ENCODE measurements at regions of chr16 and their contacts with region 1.

Region 1: DNA sequence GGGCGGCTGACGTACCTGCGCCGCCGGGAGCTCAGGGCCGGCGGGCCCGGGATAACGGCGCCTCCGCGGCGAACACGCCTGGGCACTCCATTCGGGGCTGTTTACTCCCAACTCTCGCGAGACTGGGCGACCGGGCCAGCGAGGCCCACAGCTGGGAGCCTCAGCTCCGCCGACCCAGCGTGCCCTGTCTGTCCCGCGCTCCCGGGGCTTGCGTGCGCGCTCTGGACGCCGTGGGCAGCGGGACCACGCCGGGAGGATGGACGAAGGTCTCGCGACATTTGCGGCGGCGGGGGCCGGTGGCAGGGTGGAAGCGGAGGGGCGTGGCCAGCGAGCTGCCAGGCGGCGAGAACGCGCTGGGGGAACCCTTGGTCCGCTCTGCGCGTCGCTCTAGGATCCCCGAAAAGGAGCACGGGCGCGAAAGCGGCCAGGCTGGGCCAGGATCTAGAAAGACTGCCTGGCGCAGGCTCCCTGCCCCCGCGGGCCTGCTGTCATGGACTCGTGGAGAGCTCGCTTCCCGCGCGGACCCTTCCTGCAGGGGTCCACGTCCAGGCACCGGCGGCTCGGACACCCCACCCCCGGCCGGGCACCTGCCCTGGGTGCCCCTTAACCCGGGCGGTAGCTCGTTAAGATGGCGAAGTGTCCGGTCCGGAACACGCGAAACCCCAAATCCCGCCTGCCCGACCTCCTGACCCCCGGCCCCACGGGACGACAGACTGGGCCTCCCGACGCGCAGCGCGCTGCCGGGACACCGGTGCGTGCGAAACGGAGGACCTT is at the start of gene MBTPS1:
- DNase-seq: peak; percentile 94 to 99 (median 97)
- ATAC-seq: peak; percentile 92
- H3K4me3 ChIP-seq: peak within 1 kb of the TSS; percentile 99
- H3K4me3 Mint-ChIP-seq: peak within 1 kb of the TSS; percentile 90 to 96 (median 94)
- H3K27ac ChIP-seq: peak within 1 kb of the TSS; percentile 86
- H3K27ac Mint-ChIP-seq: peak within 1 kb of the TSS; percentile 93 to 98 (median 96)
- H3K4me1 ChIP-seq: peaks cover 14 to 18% of the 10 kb centered on the region in 2 donors
- H3K4me1 Mint-ChIP-seq: peaks cover 6 to 36% (median 23%) of the 10 kb centered on the region in 7 donors
- H3K27me3 ChIP-seq: no peaks in the 10 kb centered on the region
- H3K27me3 Mint-ChIP-seq: no peaks in the 10 kb centered on the region
- total RNA-seq, gene MBTPS1: 65.3 to 157 (median 138) TPM

Region 2: GRCh38 chr16:83717814-83718213 is 399.1 kb before region 1 on chr16:
- CTCF ChIA-PET with region 1: no interaction called
- POLR2A ChIA-PET with region 1: no interaction called
- intact Hi-C with region 1: no loop called
- DNase-seq: no peak
- ATAC-seq: no peak
- H3K4me3 ChIP-seq: no peak overlapping the region
- H3K4me3 Mint-ChIP-seq: no peak overlapping the region
- H3K27ac ChIP-seq: no peak overlapping the region
- H3K27ac Mint-ChIP-seq: no peak overlapping the region
- H3K4me1 ChIP-seq: no peaks in the 10 kb centered on the region
- H3K4me1 Mint-ChIP-seq: peaks cover 0 to 8% (median 0%) of the 10 kb centered on the region in 7 donors
- H3K27me3 ChIP-seq: peaks cover 0 to 2% of the 10 kb centered on the region in 2 donors
- H3K27me3 Mint-ChIP-seq: peaks cover 0 to 17% (median 0%) of the 10 kb centered on the region in 5 donors

Region 3: DNA sequence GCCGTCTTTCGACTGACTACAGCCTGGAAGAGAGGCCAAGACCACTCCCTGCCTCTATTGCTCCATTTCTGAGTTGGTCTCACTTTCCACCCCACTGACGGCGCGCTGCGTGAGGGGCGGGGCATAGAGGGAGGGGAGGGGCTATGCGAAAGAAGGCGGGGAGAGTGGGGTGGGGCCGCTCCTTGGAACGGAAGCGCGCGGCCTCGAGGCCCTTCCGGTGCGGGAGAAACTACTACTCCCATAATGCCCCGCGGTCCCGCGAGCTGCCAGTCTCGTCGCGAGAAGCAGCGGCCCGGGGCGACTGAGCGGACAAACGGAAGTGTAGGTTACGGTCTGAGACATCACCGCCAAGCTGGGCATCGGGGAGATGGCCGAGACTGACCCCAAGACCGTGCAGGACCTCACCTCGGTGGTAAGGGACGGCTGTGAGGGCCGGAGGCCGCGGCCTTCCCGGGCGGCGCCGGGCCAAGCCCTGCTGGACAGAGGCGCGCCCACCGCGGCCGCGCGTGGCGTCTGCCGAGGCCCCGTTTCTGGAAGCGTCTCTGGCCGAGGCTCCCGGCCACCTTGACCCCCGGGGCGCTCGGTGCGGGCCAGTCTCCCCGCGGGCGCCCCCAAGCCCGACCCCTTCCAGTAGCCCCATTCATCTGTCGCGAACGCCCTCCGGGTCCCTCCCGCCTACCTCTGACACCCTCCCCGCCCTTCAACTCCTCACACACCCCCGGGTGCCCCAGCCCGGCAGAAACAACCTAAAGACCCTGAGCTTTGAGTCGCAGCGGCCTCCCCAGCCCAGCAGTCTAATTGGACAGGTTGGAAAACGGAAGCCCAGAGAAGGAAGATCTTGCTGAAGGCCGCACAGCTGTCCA is 309.0 kb before region 1 on chr16 and contains the start of gene HSBP1:
- CTCF ChIA-PET with region 1: no interaction called
- POLR2A ChIA-PET with region 1: no interaction called
- intact Hi-C with region 1: loop called (anchors 1 kb)
- DNase-seq: peak; percentile 85 to 93 (median 91)
- ATAC-seq: peak; percentile 100
- H3K4me3 ChIP-seq: peak within 1 kb of the TSS; percentile 90
- H3K4me3 Mint-ChIP-seq: peak within 1 kb of the TSS; percentile 91 to 99 (median 98)
- H3K27ac ChIP-seq: peak within 1 kb of the TSS; percentile 87
- H3K27ac Mint-ChIP-seq: peak within 1 kb of the TSS; percentile 87 to 98 (median 95)
- H3K4me1 ChIP-seq: peaks cover 9 to 21% of the 10 kb centered on the region in 2 donors
- H3K4me1 Mint-ChIP-seq: peaks cover 19 to 55% (median 48%) of the 10 kb centered on the region in 7 donors
- H3K27me3 ChIP-seq: no peaks in the 10 kb centered on the region
- H3K27me3 Mint-ChIP-seq: peaks cover 0 to 5% (median 0%) of the 10 kb centered on the region in 5 donors
- total RNA-seq, gene HSBP1: 20.6 to 78.3 (median 32.3) TPM

Region 4: DNA sequence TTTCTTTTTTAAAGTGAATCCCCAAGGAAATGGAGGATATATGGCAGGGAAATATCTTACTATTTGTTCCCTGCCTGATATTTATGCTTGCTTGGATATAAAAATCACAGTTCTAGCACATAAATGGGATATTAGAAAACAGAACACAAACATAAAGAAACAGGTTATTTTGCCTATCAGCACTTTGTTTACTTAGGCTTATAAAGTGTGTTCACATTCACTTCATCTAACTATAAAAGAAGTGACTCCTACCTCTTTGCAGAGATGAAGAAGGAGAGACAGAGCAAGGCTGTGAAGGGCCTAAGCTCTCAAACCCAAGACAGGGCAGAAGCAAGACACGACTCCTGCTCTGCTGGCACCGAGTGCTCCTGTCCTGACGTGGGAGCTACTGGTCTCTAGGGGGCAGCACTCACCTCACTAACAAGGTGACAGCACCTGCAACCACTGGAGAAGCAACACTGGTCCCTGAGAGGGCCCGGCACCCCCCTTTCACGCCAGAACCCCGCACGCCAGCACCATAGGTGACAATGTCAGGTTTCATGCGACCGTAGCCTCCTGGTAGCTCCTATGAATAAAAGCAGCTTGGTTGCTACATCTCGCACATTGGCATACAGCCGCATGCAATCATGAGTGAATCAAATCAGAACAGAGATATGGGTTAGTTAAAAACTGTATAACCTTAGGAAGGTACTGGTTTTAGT is 32.2 kb before region 1 on chr16:
- CTCF ChIA-PET with region 1: interaction called, 8 read pairs
- POLR2A ChIA-PET with region 1: interaction called, 5 read pairs
- intact Hi-C with region 1: loop called (anchors 1 kb)
- DNase-seq: peak; percentile 31 to 71 (median 65)
- ATAC-seq: peak; percentile 87
- H3K4me3 ChIP-seq: no peak overlapping the region
- H3K4me3 Mint-ChIP-seq: peak overlapping the region in 1 of 10 donors; percentile 18
- H3K27ac ChIP-seq: no peak overlapping the region
- H3K27ac Mint-ChIP-seq: peak overlapping the region in 1 of 9 donors; percentile 15
- H3K4me1 ChIP-seq: peaks cover 4 to 24% of the 10 kb centered on the region in 2 donors
- H3K4me1 Mint-ChIP-seq: peaks cover 31 to 59% (median 52%) of the 10 kb centered on the region in 7 donors
- H3K27me3 ChIP-seq: no peaks in the 10 kb centered on the region
- H3K27me3 Mint-ChIP-seq: no peaks in the 10 kb centered on the region

Region 5: GRCh38 chr16:84144859-84145639 is 28.1 kb after region 1 on chr16 and contains the starts of genes DNAAF1 and HSDL1:
- CTCF ChIA-PET with region 1: interaction called, 3 read pairs
- POLR2A ChIA-PET with region 1: interaction called, 21 read pairs
- intact Hi-C with region 1: loop called (anchors 1 kb)
- DNase-seq: peak; percentile 88 to 99 (median 94)
- ATAC-seq: peak; percentile 95
- H3K4me3 ChIP-seq: peak within 1 kb of the TSS; percentile 68
- H3K4me3 Mint-ChIP-seq: peak within 1 kb of the TSS; percentile 91 to 98 (median 94)
- H3K27ac ChIP-seq: peak within 1 kb of the TSS; percentile 87
- H3K27ac Mint-ChIP-seq: peak within 1 kb of the TSS; percentile 79 to 95 (median 89)
- H3K4me1 ChIP-seq: peaks cover 4 to 8% of the 10 kb centered on the region in 2 donors
- H3K4me1 Mint-ChIP-seq: peaks cover 9 to 32% (median 29%) of the 10 kb centered on the region in 7 donors
- H3K27me3 ChIP-seq: no peaks in the 10 kb centered on the region
- H3K27me3 Mint-ChIP-seq: peaks cover 0 to 22% (median 0%) of the 10 kb centered on the region in 5 donors
- total RNA-seq, gene DNAAF1: 0.66 to 2.2 TPM in 2 of 5 experiments, not detected in the others
- total RNA-seq, gene HSDL1: 12.6 to 26.6 (median 14.4) TPM

Region 6: GRCh38 chr16:84186685-84187437 is 70.0 kb after region 1 on chr16 and contains the start of gene TAF1C:
- CTCF ChIA-PET with region 1: interaction called, 6 read pairs
- POLR2A ChIA-PET with region 1: interaction called, 6 read pairs
- intact Hi-C with region 1: loop called (anchors 1 kb)
- DNase-seq: peak; percentile 81 to 94 (median 87)
- ATAC-seq: peak; percentile 99
- H3K4me3 ChIP-seq: peak within 1 kb of the TSS; percentile 91
- H3K4me3 Mint-ChIP-seq: peak within 1 kb of the TSS; percentile 89 to 94 (median 92)
- H3K27ac ChIP-seq: peak within 1 kb of the TSS; percentile 80
- H3K27ac Mint-ChIP-seq: peak within 1 kb of the TSS; percentile 78 to 95 (median 91)
- H3K4me1 ChIP-seq: peaks cover 0 to 6% of the 10 kb centered on the region in 2 donors
- H3K4me1 Mint-ChIP-seq: peaks cover 22 to 29% (median 25%) of the 10 kb centered on the region in 7 donors
- H3K27me3 ChIP-seq: no peaks in the 10 kb centered on the region
- H3K27me3 Mint-ChIP-seq: no peaks in the 10 kb centered on the region
- total RNA-seq, gene TAF1C: 62.6 to 127 (median 85.4) TPM

Measured in naive thymus-derived CD4-positive, alpha-beta T cell (primary cell).